ENCODE measurements at regions of chr20 and their contacts with region 1.

Region 1: GRCh38 chr20:20860078-20860806 is 147.8 kb upstream of the RALGAPA2 start:
- DNase-seq: peak; percentile 89
- H3K4me3 Mint-ChIP-seq: no peak overlapping the region
- H3K27ac Mint-ChIP-seq: no peak overlapping the region
- H3K4me1 Mint-ChIP-seq: peaks cover 9% of the 10 kb centered on the region
- H3K27me3 Mint-ChIP-seq: no peaks in the 10 kb centered on the region
- CTCF ChIP-seq: peak; percentile 85

Region 2: GRCh38 chr20:20369250-20370093 is 490.8 kb before region 1 on chr20:
- CTCF ChIA-PET with region 1: no interaction called
- POLR2A ChIA-PET with region 1: no interaction called
- intact Hi-C with region 1: no loop called
- DNase-seq: no peak
- H3K4me3 Mint-ChIP-seq: peak overlapping the region; percentile 28
- H3K27ac Mint-ChIP-seq: no peak overlapping the region
- H3K4me1 Mint-ChIP-seq: peaks cover 9% of the 10 kb centered on the region
- H3K27me3 Mint-ChIP-seq: peaks cover 32% of the 10 kb centered on the region
- CTCF ChIP-seq: no peak

Region 3: DNA sequence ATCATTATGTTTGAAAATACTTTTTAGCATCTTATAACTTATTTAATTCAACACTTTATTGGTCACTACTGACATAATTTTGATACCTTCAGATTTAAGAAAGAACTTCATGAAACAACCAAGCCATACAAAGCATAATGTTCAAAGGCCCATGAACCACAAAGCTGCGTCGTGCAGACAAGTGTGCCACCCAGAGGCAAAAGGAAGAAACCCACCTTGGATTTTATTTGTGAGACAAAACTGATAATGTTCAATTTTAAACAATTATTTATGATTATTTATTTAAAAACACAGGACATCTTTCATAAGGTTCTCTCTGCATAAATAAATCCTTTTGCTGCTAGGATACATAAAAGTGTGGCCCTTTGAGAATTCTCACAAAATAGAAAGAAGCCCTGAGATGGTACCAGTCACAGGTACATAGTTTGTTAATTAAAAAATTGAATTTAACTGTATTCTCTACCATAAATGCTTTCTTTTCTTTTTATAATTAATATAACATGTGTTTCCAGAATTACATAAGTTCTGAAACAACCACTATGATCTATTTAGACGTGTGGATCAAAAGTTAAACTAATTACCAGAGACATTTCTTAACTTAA is 291.5 kb before region 1 on chr20:
- CTCF ChIA-PET with region 1: no interaction called
- POLR2A ChIA-PET with region 1: no interaction called
- intact Hi-C with region 1: no loop called
- DNase-seq: peak; percentile 49
- H3K4me3 Mint-ChIP-seq: no peak overlapping the region
- H3K27ac Mint-ChIP-seq: no peak overlapping the region
- H3K4me1 Mint-ChIP-seq: no peaks in the 10 kb centered on the region
- H3K27me3 Mint-ChIP-seq: no peaks in the 10 kb centered on the region
- CTCF ChIP-seq: peak; percentile 81

Region 4: DNA sequence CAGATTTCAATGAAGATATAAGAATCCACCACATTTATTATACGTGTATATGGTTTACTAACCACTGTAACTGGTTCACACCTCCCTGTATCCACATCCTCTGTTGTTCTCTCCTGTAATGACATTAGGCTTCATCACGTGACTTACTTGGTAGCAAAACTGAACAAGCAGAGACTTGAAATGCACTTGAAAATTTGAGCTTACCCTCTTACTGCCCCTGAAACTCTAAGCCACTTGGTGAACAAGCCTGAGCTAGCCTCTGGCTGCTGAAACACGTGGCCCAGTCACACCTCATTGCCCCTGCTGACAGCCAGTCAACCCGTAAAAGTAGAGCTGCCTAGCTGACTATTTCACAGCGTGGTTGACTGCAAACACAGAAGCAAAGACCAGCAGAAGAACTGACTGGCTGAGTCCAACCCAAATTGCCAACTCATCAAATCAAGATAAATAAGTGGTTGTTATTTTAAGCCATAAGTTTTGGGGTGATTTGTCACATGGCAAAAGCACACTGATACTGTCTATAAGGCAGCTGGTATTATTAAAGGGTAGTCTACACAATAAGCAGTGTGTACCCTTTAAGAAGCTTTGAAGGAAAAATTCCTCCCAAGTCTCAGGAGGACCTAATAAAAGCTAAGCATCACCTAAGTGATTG is 256.8 kb before region 1 on chr20:
- CTCF ChIA-PET with region 1: no interaction called
- POLR2A ChIA-PET with region 1: no interaction called
- intact Hi-C with region 1: no loop called
- DNase-seq: peak; percentile 88
- H3K4me3 Mint-ChIP-seq: no peak overlapping the region
- H3K27ac Mint-ChIP-seq: peak overlapping the region; percentile 50
- H3K4me1 Mint-ChIP-seq: peaks cover 14% of the 10 kb centered on the region
- H3K27me3 Mint-ChIP-seq: no peaks in the 10 kb centered on the region
- CTCF ChIP-seq: no peak

Region 5: DNA sequence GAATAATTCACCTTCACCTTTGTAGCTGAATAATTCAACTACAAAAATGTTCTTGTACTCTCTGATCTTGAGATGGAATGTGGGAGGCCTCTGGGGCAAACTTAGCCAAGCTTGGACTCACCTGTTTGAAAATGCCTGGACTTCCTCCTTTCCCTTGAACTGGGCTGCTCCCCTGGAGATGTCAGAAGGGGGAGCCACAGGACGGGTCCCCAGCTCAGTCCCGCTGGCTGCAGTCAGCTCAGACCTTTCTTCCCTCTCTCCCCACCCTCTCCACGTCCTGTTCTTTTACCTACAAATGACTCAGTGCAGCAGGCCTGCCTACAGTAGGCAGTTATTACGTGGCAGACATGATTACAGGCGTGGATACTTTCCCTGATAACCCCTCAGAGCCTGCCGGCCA is 16.3 kb before region 1 on chr20:
- CTCF ChIA-PET with region 1: interaction called, 171 read pairs
- POLR2A ChIA-PET with region 1: no interaction called
- intact Hi-C with region 1: no loop called
- DNase-seq: peak; percentile 23
- H3K4me3 Mint-ChIP-seq: no peak overlapping the region
- H3K27ac Mint-ChIP-seq: no peak overlapping the region
- H3K4me1 Mint-ChIP-seq: no peaks in the 10 kb centered on the region
- H3K27me3 Mint-ChIP-seq: no peaks in the 10 kb centered on the region
- CTCF ChIP-seq: no peak

Region 6: DNA sequence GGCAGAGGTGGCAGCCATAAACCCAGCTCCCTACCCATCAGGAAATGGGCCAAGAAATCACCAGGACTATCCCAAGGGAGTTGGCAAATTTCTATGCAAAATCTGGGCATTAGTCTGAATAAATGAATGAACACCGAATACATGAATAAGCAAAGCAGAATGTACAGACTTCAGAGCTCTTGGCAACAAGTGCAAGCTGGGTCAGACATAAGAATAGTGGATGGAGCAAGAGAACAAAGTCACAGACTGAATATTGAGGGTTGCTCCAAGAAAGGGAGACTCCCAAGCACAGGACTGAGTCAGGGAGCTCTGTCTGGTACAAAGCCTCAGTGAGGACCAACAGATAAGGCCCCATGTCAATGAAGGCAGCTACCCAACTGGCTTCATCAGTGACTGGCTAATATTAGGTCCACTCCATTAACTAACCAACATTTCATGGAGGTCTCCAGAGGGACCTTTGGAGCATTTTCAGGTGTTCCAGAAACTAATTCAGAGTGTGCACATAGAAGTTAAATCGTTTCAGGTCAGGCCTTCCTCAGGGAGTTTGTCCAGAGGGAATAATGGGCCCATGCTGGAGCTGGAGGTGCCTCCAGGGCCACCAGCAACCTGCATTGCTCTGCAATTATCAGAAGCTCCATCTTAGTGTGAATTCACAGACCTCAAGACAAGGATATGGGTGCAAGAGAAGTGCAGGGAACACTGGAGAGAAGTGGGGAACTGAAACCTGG is 43.7 kb after region 1 on chr20:
- CTCF ChIA-PET with region 1: interaction called, 13 read pairs
- POLR2A ChIA-PET with region 1: no interaction called
- intact Hi-C with region 1: no loop called
- DNase-seq: no peak
- H3K4me3 Mint-ChIP-seq: no peak overlapping the region
- H3K27ac Mint-ChIP-seq: no peak overlapping the region
- H3K4me1 Mint-ChIP-seq: no peaks in the 10 kb centered on the region
- H3K27me3 Mint-ChIP-seq: peaks cover 34% of the 10 kb centered on the region
- CTCF ChIP-seq: no peak

Region 7: DNA sequence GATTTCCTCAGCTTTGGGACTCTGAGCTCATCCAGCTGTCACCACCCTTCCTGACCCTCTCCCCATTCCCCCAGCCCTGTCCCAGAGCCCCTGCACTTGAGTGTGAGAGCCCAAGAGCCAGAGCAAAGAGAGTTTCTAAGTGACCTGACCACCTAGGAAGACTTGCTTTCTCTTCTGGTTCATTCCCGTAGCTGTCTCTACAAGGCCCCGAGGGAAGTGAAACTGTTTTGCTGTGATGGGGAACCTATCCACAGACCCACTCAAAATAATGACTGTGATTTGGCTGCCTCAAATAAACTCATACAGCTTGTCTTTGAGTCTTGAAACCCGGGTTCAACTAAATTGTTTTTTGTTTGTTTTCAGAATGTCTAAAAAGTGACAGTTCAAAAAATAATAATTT is 368.3 kb after region 1 on chr20:
- CTCF ChIA-PET with region 1: interaction called, 38 read pairs
- POLR2A ChIA-PET with region 1: no interaction called
- intact Hi-C with region 1: no loop called
- DNase-seq: no peak
- H3K4me3 Mint-ChIP-seq: no peak overlapping the region
- H3K27ac Mint-ChIP-seq: no peak overlapping the region
- H3K4me1 Mint-ChIP-seq: no peaks in the 10 kb centered on the region
- H3K27me3 Mint-ChIP-seq: no peaks in the 10 kb centered on the region
- CTCF ChIP-seq: no peak

Region 8: DNA sequence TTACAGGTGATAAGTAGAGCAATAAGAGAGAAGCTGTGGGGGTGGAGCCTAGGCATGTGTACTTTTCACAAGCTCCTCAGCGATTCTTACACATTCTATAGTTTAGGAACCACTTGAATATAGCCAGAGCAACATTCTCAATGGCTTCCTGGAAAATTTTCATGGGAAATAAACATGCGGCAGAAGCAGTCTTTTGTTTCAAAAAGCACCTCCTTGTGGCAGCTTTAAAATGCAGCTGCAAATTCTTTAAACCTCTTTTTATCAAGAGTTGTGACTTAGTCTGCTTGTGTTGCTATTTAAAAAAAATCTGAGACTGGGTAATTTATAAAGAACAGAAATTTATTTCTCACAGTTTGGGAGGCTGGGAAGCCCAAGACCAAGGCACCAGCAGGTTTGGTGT is 629.9 kb after region 1 on chr20:
- CTCF ChIA-PET with region 1: interaction called, 21 read pairs
- POLR2A ChIA-PET with region 1: no interaction called
- intact Hi-C with region 1: no loop called
- DNase-seq: no peak
- H3K4me3 Mint-ChIP-seq: no peak overlapping the region
- H3K27ac Mint-ChIP-seq: no peak overlapping the region
- H3K4me1 Mint-ChIP-seq: no peaks in the 10 kb centered on the region
- H3K27me3 Mint-ChIP-seq: peaks cover 15% of the 10 kb centered on the region
- CTCF ChIP-seq: peak; percentile 18

Region 9: GRCh38 chr20:21511850-21512633 is 651.8 kb after region 1 on chr20:
- CTCF ChIA-PET with region 1: interaction called, 316 read pairs
- POLR2A ChIA-PET with region 1: no interaction called
- intact Hi-C with region 1: no loop called
- DNase-seq: no peak
- H3K4me3 Mint-ChIP-seq: no peak overlapping the region
- H3K27ac Mint-ChIP-seq: no peak overlapping the region
- H3K4me1 Mint-ChIP-seq: peaks cover 5% of the 10 kb centered on the region
- H3K27me3 Mint-ChIP-seq: peaks cover 30% of the 10 kb centered on the region
- CTCF ChIP-seq: no peak

Region 10: DNA sequence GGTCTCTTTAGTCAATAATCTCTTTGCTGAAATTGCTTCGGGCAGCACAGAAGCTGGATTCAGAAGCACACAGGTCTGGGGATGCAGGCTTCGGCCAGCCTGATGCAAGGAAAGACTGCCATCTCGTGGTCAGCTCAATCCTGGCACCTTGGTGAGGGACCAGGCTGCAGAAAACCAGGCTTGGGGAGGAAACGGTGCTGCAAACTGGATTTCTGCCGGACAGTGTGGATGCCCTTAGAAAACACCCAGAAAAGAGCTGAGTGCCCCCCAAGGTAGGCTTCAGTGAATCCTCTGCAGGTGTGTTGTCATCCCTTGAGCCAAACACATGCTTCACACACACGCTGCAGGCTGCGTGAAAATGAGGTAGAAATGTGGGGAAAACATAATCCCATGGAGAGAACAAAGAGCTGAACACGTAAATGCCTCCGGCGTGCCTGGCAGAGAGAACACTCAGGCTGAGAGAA is 755.4 kb after region 1 on chr20:
- CTCF ChIA-PET with region 1: interaction called, 44 read pairs
- POLR2A ChIA-PET with region 1: no interaction called
- intact Hi-C with region 1: loop called (anchors 2 kb)
- DNase-seq: peak; percentile 61
- H3K4me3 Mint-ChIP-seq: no peak overlapping the region
- H3K27ac Mint-ChIP-seq: no peak overlapping the region
- H3K4me1 Mint-ChIP-seq: no peaks in the 10 kb centered on the region
- H3K27me3 Mint-ChIP-seq: peaks cover 25% of the 10 kb centered on the region
- CTCF ChIP-seq: peak; percentile 83

Measured in MCF 10A (cell line).